ENCODE measurements at regions of chr1 and their contacts with region 1.

Region 1: GRCh38 chr1:111755331-111756123 is at the start of gene DDX20:
- DNase-seq: peak; percentile 80
- ATAC-seq: peak; percentile 93
- H3K4me3 ChIP-seq: peak within 1 kb of the TSS; percentile 88
- H3K27ac ChIP-seq: peak within 1 kb of the TSS; percentile 87
- H3K4me1 ChIP-seq: peaks cover 3% of the 10 kb centered on the region; the same call in 1 of the 2 replicates
- H3K27me3 ChIP-seq: no peaks in the 10 kb centered on the region
- CTCF ChIP-seq: peak; percentile 84 to 97 (median 93)
- EP300 ChIP-seq: peak; percentile 8 to 58; a peak in 1 of 4 replicates
- POLR2A ChIP-seq: peak; percentile 92
- RAD21 ChIP-seq: peak; percentile 60
- polyA plus RNA-seq, gene DDX20: 7.2 to 10.9 TPM

Region 2: DNA sequence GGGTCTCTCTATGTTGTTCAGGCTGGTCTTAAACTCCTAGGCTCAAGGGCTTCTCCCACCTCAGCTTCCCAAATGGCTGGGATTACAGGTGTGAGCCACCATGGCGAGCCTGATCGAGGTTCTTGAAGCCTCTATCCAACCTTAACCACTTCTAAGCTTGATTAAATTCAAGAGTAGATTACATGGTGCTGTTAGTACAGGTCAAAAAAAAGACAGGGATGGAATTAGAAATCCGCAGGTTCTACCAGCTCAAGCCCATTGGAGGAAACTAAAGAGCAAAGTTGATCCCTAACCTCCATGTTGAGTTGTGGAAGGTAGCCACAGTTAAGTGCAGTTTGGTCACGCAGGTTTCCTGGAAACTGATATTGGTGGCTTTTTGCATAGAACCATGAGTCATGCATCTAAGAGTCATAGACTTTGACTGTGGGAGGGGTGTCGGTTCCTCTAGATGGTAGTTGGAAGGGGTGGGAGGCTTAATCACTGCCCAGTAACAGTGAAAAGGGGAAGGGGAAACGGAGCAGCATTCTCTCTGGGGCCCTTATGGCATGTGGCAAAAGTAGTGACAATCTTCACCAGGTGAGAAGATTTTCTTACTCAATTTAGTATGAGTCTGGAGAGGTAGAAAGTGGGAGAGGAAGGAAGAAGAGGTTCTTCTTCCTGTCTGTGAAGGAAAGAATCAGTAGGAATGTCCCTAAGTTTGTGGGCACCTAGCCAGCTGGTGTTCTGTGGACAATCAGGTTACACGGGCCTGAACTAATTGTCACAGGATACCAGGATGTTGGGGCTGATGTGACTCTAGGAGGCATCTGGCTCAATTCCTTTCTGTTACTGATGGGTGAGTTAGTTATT is 875.5 kb before region 1 on chr1:
- CTCF ChIA-PET with region 1: no interaction called
- POLR2A ChIA-PET with region 1: no interaction called
- RAD21 ChIA-PET with region 1: no interaction called
- SMC1A ChIA-PET with region 1: no interaction called
- in situ Hi-C with region 1: loop called (anchors 5 kb)
- intact Hi-C with region 1: no loop called
- DNase-seq: peak; percentile 65
- ATAC-seq: peak; percentile 65
- H3K4me3 ChIP-seq: peak overlapping the region; percentile 62
- H3K27ac ChIP-seq: peak overlapping the region; percentile 76
- H3K4me1 ChIP-seq: peaks cover 22% of the 10 kb centered on the region
- H3K27me3 ChIP-seq: no peaks in the 10 kb centered on the region
- CTCF ChIP-seq: no peak
- EP300 ChIP-seq: peak in 1 of 2 experiments; percentile 58; a peak in 1 of 4 replicates
- POLR2A ChIP-seq: peak; percentile 48; the same call in 1 of the 2 replicates
- RAD21 ChIP-seq: no peak

Region 3: DNA sequence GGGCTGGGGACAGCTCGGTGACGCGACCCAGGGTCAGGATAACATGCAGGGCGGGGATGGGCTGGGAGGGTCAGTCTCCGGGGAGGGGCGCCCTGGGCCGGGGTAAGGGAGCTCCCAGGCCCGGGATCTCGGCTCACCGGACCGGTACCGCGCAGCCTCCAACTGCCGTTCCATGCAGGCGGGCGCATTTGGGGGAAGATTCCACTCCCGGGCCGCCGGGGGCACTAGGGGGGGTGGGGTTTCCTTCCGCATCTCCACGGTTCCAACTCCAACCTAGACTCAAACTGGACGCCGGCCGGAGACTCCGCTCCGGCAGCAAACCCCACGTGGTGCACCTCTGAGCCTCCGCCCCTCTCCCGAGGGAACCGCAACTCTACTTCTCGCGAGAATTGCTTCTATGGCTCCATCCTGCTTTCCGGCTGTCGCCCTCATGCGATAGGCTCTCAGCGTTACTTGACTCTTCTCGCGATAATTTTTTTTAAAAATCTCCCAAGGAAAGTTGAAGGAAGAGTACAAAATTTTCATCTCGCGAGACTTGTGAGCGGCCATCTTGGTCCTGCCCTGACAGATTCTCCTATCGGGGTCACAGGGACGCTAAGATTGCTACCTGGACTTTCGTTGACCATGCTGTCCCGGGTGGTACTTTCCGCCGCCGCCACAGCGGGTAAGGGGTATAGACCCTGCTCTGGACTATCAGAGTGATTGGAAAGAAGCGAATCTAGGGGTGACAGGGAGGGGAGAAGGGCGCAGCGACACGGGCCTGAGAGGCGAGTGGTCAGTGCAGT is 306.4 kb before region 1 on chr1 and contains the starts of genes ATP5PB and WDR77:
- CTCF ChIA-PET with region 1: interaction called, 4 read pairs
- POLR2A ChIA-PET with region 1: no interaction called
- RAD21 ChIA-PET with region 1: interaction called, 4 read pairs
- SMC1A ChIA-PET with region 1: interaction called, 8 read pairs
- in situ Hi-C with region 1: no loop called
- intact Hi-C with region 1: loop called (anchors 2 kb)
- DNase-seq: peak; percentile 98
- ATAC-seq: peak; percentile 91
- H3K4me3 ChIP-seq: peak within 1 kb of the TSS; percentile 98
- H3K27ac ChIP-seq: peak within 1 kb of the TSS; percentile 95
- H3K4me1 ChIP-seq: peaks cover 24% of the 10 kb centered on the region
- H3K27me3 ChIP-seq: no peaks in the 10 kb centered on the region
- CTCF ChIP-seq: no peak
- EP300 ChIP-seq: no peak
- POLR2A ChIP-seq: peak; percentile 79
- RAD21 ChIP-seq: no peak
- polyA plus RNA-seq, gene ATP5PB: 1,250 to 1,760 TPM
- polyA plus RNA-seq, gene WDR77: 12.7 to 34.1 TPM

Region 4: DNA sequence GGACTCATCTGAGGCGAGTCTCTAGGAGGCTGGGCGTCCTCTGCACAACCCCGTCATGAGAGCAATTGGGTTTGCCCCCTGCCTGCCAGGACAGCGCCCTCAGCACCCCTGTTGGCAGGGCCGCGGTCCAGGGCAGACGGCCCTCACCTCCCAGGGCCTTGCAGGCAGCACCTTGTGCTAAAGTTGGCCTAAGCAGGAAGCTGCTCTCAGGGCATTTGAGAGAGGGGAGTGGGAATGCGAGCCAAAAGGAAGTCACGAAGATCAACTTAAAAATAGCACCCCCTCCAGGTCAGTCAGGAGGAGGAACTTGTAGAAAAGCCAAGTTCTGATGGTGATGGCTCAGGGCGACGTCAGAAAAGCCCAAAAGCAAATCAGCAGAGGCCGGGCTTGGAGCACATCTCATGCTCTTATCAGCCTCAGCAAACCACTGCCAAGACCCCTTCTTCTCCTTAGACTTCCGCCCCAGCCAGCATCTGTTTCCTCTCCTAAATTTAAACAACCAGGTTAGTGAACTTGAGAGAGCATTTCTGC is 239.5 kb before region 1 on chr1:
- CTCF ChIA-PET with region 1: interaction called, 16 read pairs
- POLR2A ChIA-PET with region 1: no interaction called
- RAD21 ChIA-PET with region 1: interaction called, 5 read pairs
- SMC1A ChIA-PET with region 1: interaction called, 4 read pairs
- in situ Hi-C with region 1: no loop called
- intact Hi-C with region 1: no loop called
- DNase-seq: no peak
- ATAC-seq: peak; percentile 42
- H3K4me3 ChIP-seq: peak overlapping the region; percentile 45; the same call in 1 of the 2 replicates
- H3K27ac ChIP-seq: peak overlapping the region; percentile 33
- H3K4me1 ChIP-seq: peaks cover 36% of the 10 kb centered on the region
- H3K27me3 ChIP-seq: no peaks in the 10 kb centered on the region; a peak in 1 of 4 replicates
- CTCF ChIP-seq: peak; percentile 12 to 50 (median 34); a peak in 5 of 6 replicates
- EP300 ChIP-seq: no peak
- POLR2A ChIP-seq: no peak
- RAD21 ChIP-seq: no peak

Region 5: DNA sequence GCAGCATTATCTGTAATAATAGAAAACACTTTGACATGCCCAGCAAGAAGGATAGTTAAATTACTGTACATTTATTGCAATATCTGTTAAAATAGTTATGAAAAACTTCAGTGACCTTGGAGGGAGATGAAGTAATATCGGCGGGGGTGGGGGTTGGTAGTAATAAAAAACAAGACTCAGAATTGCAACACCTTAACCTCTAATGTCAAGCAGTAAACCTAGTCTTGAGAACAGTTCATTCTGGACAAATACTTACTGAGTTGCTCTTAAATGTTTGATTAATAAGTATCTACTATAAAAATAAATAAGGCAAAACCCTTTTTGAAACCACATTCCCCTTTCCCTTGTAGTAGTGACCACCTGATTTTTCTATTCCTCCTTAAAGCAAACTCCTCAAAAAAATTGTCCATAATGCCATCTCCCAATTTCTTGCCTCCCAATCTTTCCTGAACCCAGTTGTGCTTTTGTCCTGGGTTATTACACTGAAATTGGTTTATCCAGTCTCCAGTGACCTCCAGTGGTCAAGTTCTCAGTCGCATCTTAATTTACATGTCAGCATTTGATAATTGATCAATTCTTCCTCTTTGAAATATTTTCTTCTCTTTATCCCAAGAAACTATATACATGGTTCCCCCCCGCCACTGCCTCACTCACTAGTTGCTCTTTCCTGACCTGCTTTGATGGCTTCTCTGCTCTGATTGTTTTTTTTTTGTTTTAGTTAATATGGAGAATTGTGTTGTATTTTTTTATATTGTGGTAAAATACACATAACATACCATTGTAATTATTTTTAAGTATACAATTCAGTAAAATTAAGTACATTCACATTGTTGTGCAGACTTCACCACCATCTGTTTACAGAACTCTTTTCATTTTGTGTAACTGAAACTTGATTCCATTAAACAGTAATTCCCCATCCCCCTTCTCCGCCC is 99.2 kb before region 1 on chr1:
- CTCF ChIA-PET with region 1: interaction called, 3 read pairs
- POLR2A ChIA-PET with region 1: no interaction called
- RAD21 ChIA-PET with region 1: no interaction called
- SMC1A ChIA-PET with region 1: no interaction called
- in situ Hi-C with region 1: no loop called
- intact Hi-C with region 1: loop called (anchors 5 kb)
- DNase-seq: no peak
- ATAC-seq: no peak
- H3K4me3 ChIP-seq: no peak overlapping the region
- H3K27ac ChIP-seq: no peak overlapping the region
- H3K4me1 ChIP-seq: peaks cover 21% of the 10 kb centered on the region
- H3K27me3 ChIP-seq: no peaks in the 10 kb centered on the region
- CTCF ChIP-seq: peak; percentile 28 to 54 (median 52); a peak in 5 of 6 replicates
- EP300 ChIP-seq: no peak
- POLR2A ChIP-seq: no peak
- RAD21 ChIP-seq: peak; percentile 83

Region 6: GRCh38 chr1:111720274-111720976 is 35.1 kb before region 1 on chr1:
- CTCF ChIA-PET with region 1: interaction called, 42 read pairs
- POLR2A ChIA-PET with region 1: no interaction called
- RAD21 ChIA-PET with region 1: interaction called, 31 read pairs
- SMC1A ChIA-PET with region 1: interaction called, 41 read pairs
- in situ Hi-C with region 1: no loop called
- intact Hi-C with region 1: no loop called
- DNase-seq: no peak
- ATAC-seq: no peak
- H3K4me3 ChIP-seq: no peak overlapping the region
- H3K27ac ChIP-seq: no peak overlapping the region
- H3K4me1 ChIP-seq: no peaks in the 10 kb centered on the region
- H3K27me3 ChIP-seq: no peaks in the 10 kb centered on the region
- CTCF ChIP-seq: no peak
- EP300 ChIP-seq: no peak
- POLR2A ChIP-seq: no peak
- RAD21 ChIP-seq: no peak

Region 7: DNA sequence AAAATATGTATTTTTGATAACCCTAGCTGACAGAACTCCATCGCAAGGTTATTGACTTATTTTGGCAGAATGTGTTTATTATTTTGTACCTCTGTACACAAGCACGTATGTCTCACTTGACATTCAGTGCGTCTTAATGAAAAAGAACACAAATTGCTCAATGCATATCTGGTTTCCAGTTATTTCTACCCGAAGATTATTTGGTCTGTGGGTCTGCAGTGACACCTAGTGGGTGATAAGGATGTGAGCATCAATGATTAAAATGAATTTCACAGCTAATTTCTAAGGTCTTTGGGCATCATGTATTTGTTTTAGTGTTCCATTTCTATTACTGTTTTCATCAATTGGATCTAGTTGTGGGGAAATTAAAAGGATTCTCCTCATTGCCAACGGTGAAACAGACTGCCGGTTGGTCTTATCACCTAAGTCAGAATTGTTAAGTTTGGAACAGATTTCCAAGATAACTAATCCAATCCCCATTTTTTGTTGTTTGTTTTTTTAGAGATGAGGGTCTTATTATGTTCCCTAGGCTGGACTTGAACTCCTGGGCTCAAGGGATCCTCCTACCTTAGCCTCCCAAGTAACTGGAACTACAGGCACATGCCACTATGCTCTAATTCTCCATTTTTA is 14.1 kb after region 1 on chr1:
- CTCF ChIA-PET with region 1: interaction called, 72 read pairs
- POLR2A ChIA-PET with region 1: interaction called, 5 read pairs
- RAD21 ChIA-PET with region 1: interaction called, 9 read pairs
- SMC1A ChIA-PET with region 1: interaction called, 50 read pairs
- in situ Hi-C with region 1: no loop called
- intact Hi-C with region 1: no loop called
- DNase-seq: peak; percentile 44
- ATAC-seq: peak; percentile 79
- H3K4me3 ChIP-seq: no peak overlapping the region
- H3K27ac ChIP-seq: no peak overlapping the region
- H3K4me1 ChIP-seq: no peaks in the 10 kb centered on the region
- H3K27me3 ChIP-seq: no peaks in the 10 kb centered on the region
- CTCF ChIP-seq: peak; percentile 66 to 87 (median 78)
- EP300 ChIP-seq: no peak
- POLR2A ChIP-seq: no peak
- RAD21 ChIP-seq: peak; percentile 92